ENCODE measurements at regions of chr5 and their contacts with region 1.

Region 1: DNA sequence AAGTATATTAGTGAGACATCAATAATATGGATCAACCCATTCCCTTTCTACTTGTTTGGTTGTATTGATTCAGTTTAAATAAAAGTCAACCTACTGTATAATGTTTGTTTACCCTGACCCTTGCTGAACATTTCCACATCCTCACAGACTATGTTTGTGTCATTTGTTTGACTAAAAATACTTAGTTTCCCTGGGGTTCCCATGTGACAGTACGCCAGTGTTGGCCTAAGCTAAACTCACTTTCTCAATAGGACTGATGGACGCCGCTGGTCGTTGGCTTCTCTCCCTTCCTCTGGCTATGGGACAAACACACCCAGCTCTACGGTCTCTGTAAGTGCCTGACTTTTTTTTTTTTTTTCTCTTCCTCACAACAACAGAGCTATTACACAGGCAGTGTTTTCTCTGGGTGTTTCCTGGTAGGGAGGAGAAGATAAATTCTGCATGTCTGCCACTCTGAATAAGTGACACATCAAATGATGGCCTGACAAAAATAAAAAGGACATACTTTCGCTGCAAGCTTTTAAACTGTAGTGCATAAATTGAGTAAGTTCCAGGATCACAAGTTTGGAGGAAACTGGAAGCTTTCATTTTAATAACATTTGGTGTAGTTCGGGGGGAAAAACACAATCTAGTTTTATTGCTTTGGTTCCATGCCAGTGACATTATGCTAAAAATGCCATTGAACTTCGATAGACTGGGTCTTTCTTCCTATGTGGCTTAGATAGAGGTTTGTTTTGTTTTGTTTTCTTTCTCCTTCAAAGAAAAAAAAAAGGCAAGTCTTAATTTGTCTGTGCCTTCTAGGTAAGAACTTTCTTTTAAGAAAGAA is 101.0 kb downstream of the CD180 start:
- DNase-seq: peak; percentile 33
- ATAC-seq: peak; percentile 46
- H3K4me3 ChIP-seq: peak overlapping the region; percentile 12; the same call in 1 of the 2 replicates
- H3K27ac ChIP-seq: peak overlapping the region; percentile 95
- H3K4me1 ChIP-seq: peaks cover 14% of the 10 kb centered on the region
- H3K27me3 ChIP-seq: no peaks in the 10 kb centered on the region
- CTCF ChIP-seq: no peak
- POLR2A ChIP-seq: no peak
- RAD21 ChIP-seq: no peak

Region 2: GRCh38 chr5:66987949-66988838 is 107.4 kb before region 1 on chr5:
- CTCF ChIA-PET with region 1: no interaction called
- POLR2A ChIA-PET with region 1: no interaction called
- dilution Hi-C with region 1: no loop called
- in situ Hi-C with region 1: no loop called
- intact Hi-C with region 1: loop called (anchors 2 kb)
- DNase-seq: peak; percentile 26
- ATAC-seq: peak; percentile 67
- H3K4me3 ChIP-seq: no peak overlapping the region
- H3K27ac ChIP-seq: no peak overlapping the region
- H3K4me1 ChIP-seq: peaks cover 6% of the 10 kb centered on the region
- H3K27me3 ChIP-seq: no peaks in the 10 kb centered on the region
- CTCF ChIP-seq: peak; percentile 70
- POLR2A ChIP-seq: no peak
- RAD21 ChIP-seq: peak; percentile 65

Region 3: DNA sequence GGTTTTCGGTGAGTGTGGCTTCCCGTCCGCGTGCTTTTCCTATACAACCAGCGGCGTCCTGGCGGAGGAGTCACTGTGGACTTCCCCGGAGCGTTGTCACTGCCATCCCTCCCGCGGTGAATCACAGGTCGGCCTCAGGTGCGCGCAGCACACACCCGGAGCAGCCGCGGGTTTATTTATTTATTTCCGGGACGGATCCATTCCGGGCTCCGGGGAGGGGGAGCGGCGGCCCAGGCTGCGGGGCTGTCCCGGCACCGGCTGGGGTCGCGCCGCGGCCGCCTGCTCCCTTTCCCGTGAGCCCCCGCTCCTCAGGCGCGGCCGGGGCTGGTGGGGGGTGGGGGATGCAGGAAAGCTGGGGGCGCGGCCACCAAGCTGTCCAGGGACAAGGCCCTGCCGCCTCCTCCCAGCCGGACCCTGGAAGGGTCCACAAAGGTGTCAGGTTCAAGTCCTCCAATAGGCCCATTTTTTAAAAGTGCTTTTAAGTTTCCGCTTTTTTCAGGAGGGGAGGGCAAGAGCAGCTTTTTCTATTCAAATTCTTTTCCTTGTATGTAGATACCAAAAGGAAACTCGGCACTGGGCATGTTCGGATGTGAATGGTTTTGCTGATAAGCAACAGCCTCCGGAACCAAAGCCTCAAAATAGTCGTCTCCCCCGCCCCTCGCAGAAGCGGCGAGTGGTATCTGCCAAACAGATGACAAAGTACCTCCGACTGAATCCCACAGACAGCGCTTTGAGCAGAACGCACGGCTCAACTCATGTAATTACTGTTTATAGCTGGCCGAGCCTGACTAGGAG is 91.4 kb before region 1 on chr5:
- CTCF ChIA-PET with region 1: no interaction called
- POLR2A ChIA-PET with region 1: no interaction called
- dilution Hi-C with region 1: no loop called
- in situ Hi-C with region 1: no loop called
- intact Hi-C with region 1: loop called (anchors 2 kb)
- DNase-seq: peak; percentile 88
- ATAC-seq: peak; percentile 84
- H3K4me3 ChIP-seq: peak overlapping the region; percentile 54
- H3K27ac ChIP-seq: peak overlapping the region; percentile 52
- H3K4me1 ChIP-seq: peaks cover 6% of the 10 kb centered on the region
- H3K27me3 ChIP-seq: no peaks in the 10 kb centered on the region
- CTCF ChIP-seq: no peak
- POLR2A ChIP-seq: peak; percentile 79; the same call in 1 of the 2 replicates
- RAD21 ChIP-seq: peak; percentile 14; the same call in 1 of the 2 replicates

Region 4: DNA sequence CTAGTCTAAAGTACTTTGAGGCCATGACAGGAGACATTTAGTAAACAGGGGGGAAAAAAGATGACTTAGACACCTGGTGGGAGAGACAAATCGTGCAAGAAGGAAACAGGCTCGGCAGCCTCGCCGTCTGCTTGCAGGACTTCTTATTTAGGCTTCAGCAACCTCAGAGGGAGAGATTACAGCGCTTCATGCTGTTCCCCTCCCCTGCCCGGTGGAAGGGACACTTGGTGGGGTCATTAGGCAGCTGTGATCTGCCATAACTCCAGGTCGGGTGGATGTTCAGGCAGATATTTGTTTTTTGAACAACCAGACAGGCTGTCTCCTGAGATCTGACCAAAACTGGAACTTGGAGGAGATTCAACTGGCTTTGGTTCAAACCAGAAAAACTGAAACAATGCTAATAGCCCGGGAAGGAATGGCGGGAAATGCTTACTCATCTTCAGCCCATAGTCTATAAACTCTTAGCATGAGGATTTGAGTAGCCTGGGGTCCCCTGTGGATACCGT is 139.2 kb after region 1 on chr5:
- CTCF ChIA-PET with region 1: no interaction called
- POLR2A ChIA-PET with region 1: no interaction called
- dilution Hi-C with region 1: no loop called
- in situ Hi-C with region 1: no loop called
- intact Hi-C with region 1: no loop called
- DNase-seq: peak; percentile 76
- ATAC-seq: peak; percentile 75
- H3K4me3 ChIP-seq: peak overlapping the region; percentile 10; the same call in 1 of the 2 replicates
- H3K27ac ChIP-seq: peak overlapping the region; percentile 22; the same call in 1 of the 2 replicates
- H3K4me1 ChIP-seq: peaks cover 3% of the 10 kb centered on the region; the same call in 1 of the 2 replicates
- H3K27me3 ChIP-seq: no peaks in the 10 kb centered on the region
- CTCF ChIP-seq: no peak
- POLR2A ChIP-seq: no peak
- RAD21 ChIP-seq: no peak

Measured in IMR-90 (cell line).